ENCODE measurements at regions of chr19 and their contacts with region 1.

Region 1: DNA sequence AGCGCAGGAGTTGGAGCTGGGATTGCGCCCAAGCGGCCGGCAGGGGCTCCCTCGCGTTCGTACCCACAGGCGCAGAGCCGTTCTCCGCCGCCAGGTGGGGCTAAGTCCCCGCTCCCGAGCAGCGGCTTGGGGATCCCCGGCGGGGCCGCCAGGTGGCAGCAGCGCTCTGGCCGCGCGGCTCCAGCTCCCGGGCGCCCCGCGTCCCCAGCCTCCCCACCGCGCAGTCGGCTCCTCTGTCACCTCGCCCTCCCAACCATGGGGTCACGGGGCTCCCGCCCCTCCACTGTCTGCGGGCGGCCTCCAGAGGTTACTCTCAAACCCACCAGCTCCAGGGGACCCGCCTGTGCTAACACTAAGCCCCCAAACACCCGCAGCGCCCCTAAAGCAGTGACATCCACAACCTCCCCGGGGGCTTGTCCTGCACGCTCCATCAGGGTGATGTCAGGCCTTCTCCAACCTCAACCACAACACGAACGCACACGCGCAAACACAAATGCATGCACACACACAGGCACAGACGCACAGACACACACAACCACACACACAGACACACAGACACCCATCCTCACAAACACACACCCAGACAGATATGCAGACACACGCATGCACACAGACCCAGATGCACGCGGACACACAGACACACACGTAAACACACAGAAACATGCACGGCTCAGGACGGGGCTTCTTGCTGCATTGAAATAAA is 18.4 kb upstream of the KCTD15 start:
- DNase-seq: peak; percentile 85 to 96
- ATAC-seq: peak; percentile 61 to 85
- H3K4me3 ChIP-seq: peak overlapping the region; percentile 42
- H3K27ac ChIP-seq: peak overlapping the region in 1 of 2 experiments; percentile 42; a peak in 2 of 6 replicates
- H3K4me1 ChIP-seq: peaks cover 27% of the 10 kb centered on the region
- CTCF ChIP-seq: peak; percentile 100
- EP300 ChIP-seq: no peak
- POLR2A ChIP-seq: no peak
- RAD21 ChIP-seq: peak; percentile 100

Region 2: GRCh38 chr19:33287927-33288326 is 490.3 kb before region 1 on chr19:
- CTCF ChIA-PET with region 1: no interaction called
- POLR2A ChIA-PET with region 1: no interaction called
- DNase-seq: no peak
- ATAC-seq: no peak
- H3K4me3 ChIP-seq: no peak overlapping the region
- H3K27ac ChIP-seq: no peak overlapping the region
- H3K4me1 ChIP-seq: peaks cover 28% of the 10 kb centered on the region
- CTCF ChIP-seq: no peak
- EP300 ChIP-seq: no peak
- POLR2A ChIP-seq: no peak
- RAD21 ChIP-seq: no peak

Region 3: DNA sequence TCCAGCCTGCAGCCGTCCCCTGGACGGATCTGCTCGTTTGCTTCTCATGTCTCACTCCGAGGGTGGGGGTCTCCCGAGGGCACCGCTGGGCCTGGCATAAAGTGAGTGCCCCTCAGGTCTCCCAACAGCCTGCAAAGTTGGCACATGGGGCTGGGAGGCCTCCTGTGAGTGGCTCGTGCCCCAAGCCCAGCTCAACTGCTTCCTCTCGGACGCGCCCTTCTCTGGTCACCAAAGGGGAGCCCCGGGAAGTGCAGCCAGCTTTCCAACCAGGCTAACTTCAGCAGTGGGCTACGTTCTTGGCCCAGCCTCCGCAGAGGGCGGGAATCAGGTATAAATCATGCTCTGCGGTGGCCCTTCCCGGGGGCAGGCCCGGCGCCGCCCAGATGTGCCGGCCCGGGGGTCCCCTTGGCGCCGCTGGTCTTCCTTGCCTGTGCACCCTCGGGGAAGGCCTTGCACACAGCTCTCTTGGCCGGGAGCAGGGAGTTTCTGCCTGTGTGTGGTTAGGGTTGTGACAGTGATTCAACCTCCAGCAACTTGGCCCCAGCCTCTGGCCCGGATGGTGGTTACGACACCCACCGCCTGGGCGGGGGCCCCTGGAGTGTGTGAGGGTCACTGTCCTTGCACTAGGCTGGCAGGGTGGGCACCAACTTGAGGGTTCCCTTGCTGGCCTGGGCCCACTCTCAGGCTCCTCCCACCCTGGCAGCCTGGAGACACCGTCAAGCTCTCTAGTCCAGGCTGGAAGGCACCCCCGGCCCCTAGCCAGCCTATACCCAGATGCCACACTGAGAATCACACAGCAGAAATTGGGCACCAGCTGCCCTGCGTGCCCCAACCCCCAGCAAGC is 384.0 kb before region 1 on chr19:
- CTCF ChIA-PET with region 1: interaction called, 16 read pairs
- POLR2A ChIA-PET with region 1: no interaction called
- DNase-seq: no peak
- ATAC-seq: peak; percentile 5 to 7; a peak in 2 of 6 replicates
- H3K4me3 ChIP-seq: no peak overlapping the region
- H3K27ac ChIP-seq: peak overlapping the region in 1 of 2 experiments; percentile 47; a peak in 3 of 6 replicates
- H3K4me1 ChIP-seq: peaks cover 30% of the 10 kb centered on the region
- CTCF ChIP-seq: no peak
- EP300 ChIP-seq: no peak
- POLR2A ChIP-seq: no peak
- RAD21 ChIP-seq: no peak

Region 4: DNA sequence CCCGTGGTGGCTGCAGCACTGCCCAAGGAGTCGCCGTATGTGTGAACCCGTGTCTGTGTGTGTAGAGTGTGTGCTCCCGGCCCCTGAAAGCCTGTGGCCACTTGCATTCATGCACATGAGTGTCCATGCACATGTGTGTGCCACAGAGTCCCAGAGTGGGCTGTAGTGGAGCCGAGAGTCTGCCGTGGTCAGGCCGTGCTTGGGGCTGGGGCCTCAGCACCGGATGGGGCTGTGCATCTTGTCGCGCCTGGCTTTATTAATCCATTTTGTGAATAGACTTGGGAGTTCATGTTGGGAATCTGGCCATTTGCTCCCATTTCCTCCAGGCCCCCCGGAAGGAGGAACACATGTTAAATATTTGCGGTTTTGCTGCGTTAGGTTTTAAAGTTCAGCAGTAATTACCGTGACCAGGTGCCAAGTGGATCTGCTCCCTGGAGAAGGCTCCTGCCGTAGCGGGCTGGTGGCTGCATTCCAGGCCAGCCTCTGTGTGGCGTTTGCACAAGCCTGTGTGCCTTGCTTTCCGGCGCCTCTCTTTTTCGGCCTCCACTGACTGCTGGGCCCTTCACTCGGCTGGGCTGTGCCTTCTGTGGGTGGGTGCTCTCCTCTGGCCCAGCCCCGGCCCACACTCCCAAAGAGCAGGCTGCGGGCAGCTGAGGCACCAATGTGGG is 50.8 kb before region 1 on chr19:
- CTCF ChIA-PET with region 1: interaction called, 10 read pairs
- POLR2A ChIA-PET with region 1: no interaction called
- DNase-seq: no peak
- ATAC-seq: no peak; a peak in 2 of 6 replicates
- H3K4me3 ChIP-seq: no peak overlapping the region
- H3K27ac ChIP-seq: no peak overlapping the region
- H3K4me1 ChIP-seq: no peaks in the 10 kb centered on the region
- CTCF ChIP-seq: no peak
- EP300 ChIP-seq: no peak
- POLR2A ChIP-seq: no peak
- RAD21 ChIP-seq: no peak

Region 5: GRCh38 chr19:33841685-33842084 is 63.4 kb after region 1 on chr19:
- CTCF ChIA-PET with region 1: interaction called, 14 read pairs
- POLR2A ChIA-PET with region 1: no interaction called
- DNase-seq: no peak
- ATAC-seq: peak in 1 of 2 experiments; percentile 25; a peak in 3 of 6 replicates
- H3K4me3 ChIP-seq: no peak overlapping the region
- H3K27ac ChIP-seq: no peak overlapping the region
- H3K4me1 ChIP-seq: no peaks in the 10 kb centered on the region
- CTCF ChIP-seq: no peak
- EP300 ChIP-seq: no peak
- POLR2A ChIP-seq: no peak
- RAD21 ChIP-seq: no peak

Region 6: GRCh38 chr19:33971073-33971472 is 192.8 kb after region 1 on chr19:
- CTCF ChIA-PET with region 1: interaction called, 14 read pairs
- POLR2A ChIA-PET with region 1: no interaction called
- DNase-seq: no peak
- ATAC-seq: no peak
- H3K4me3 ChIP-seq: no peak overlapping the region
- H3K27ac ChIP-seq: no peak overlapping the region
- H3K4me1 ChIP-seq: no peaks in the 10 kb centered on the region
- CTCF ChIP-seq: no peak
- EP300 ChIP-seq: no peak
- POLR2A ChIP-seq: no peak
- RAD21 ChIP-seq: no peak

Region 7: DNA sequence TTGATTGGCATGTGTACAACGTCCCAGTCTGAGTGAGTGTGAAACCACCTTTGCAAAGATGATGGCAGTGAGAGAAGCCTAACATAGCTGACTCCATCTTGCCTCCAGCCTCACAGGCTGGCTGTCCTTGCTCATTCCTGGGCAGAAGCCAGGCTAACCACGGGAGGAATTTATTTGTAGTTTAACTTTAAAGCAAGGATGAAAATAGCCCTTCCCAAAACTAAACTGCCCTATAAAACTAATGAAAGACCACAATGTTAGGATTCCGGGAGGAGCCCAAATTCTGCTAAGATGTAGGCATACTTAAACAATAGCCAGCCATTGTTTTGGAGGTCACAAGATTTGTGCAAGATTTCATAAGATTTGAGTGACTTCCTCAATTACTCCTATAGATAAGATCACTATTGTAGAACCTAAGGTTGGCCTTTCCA is 297.4 kb after region 1 on chr19:
- CTCF ChIA-PET with region 1: interaction called, 510 read pairs
- POLR2A ChIA-PET with region 1: no interaction called
- DNase-seq: no peak
- ATAC-seq: no peak
- H3K4me3 ChIP-seq: no peak overlapping the region
- H3K27ac ChIP-seq: no peak overlapping the region
- H3K4me1 ChIP-seq: no peaks in the 10 kb centered on the region
- CTCF ChIP-seq: no peak
- EP300 ChIP-seq: no peak
- POLR2A ChIP-seq: no peak
- RAD21 ChIP-seq: no peak

Region 8: GRCh38 chr19:34155686-34156085 is 377.4 kb after region 1 on chr19:
- CTCF ChIA-PET with region 1: interaction called, 258 read pairs
- POLR2A ChIA-PET with region 1: no interaction called
- DNase-seq: no peak
- ATAC-seq: no peak
- H3K4me3 ChIP-seq: no peak overlapping the region
- H3K27ac ChIP-seq: no peak overlapping the region
- H3K4me1 ChIP-seq: peaks cover 14% of the 10 kb centered on the region
- CTCF ChIP-seq: no peak
- EP300 ChIP-seq: no peak
- POLR2A ChIP-seq: no peak
- RAD21 ChIP-seq: no peak